Ovary (tissue), 10 donors: ENCODE measurements at regions of chr6 and their contacts with region 1.

Region 1: GRCh38 chr6:155327326-155328073 is 13.2 kb upstream of the TFB1M start:
- DNase-seq: peak; percentile 56 to 78 (median 68)
- H3K4me3 ChIP-seq: no peak overlapping the region
- H3K27ac ChIP-seq: no peak overlapping the region
- H3K4me1 ChIP-seq: no peaks in the 10 kb centered on the region
- H3K27me3 ChIP-seq: no peaks in the 10 kb centered on the region
- CTCF ChIP-seq: peak; percentile 69 to 87 (median 81)
- EP300 ChIP-seq: no peak
- POLR2A ChIP-seq: no peak

Region 2: DNA sequence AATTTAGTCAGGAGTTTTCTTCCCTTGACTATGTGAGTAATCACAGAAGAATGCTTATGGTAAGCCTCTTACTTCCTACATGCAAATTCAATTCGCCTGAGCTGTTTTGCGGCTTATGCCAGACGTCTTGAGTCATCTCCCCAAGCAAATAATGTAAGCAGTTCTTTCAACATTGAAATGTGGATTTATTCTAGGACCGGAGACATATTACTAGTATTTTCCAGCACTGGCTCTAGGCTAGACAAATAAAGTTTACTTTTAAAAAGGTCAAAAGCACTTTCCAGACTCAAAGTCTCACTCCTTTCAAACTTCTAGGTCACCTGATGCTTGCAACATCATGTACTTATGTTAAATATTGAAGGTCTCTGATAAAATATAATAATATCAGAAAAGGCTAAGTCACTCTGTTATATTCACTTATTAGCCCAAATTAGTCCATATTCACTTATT is 166.2 kb after region 1 on chr6:
- intact Hi-C with region 1: loop called in 3 of 4 experiments (anchors 5 to 10 kb)
- DNase-seq: peak in 4 of 5 donors; percentile 36 to 69 (median 62)
- H3K4me3 ChIP-seq: no peak overlapping the region
- H3K27ac ChIP-seq: peak overlapping the region; percentile 40 to 82
- H3K4me1 ChIP-seq: peaks cover 4% of the 10 kb centered on the region
- H3K27me3 ChIP-seq: no peaks in the 10 kb centered on the region
- CTCF ChIP-seq: no peak
- EP300 ChIP-seq: no peak
- POLR2A ChIP-seq: no peak

Region 3: GRCh38 chr6:155530219-155530834 is 202.8 kb after region 1 on chr6:
- intact Hi-C with region 1: loop called in 1 of 4 experiments (anchors 10 kb)
- DNase-seq: no peak
- H3K4me3 ChIP-seq: no peak overlapping the region
- H3K27ac ChIP-seq: no peak overlapping the region
- H3K4me1 ChIP-seq: no peaks in the 10 kb centered on the region
- H3K27me3 ChIP-seq: no peaks in the 10 kb centered on the region
- CTCF ChIP-seq: peak in 2 of 3 donors; percentile 35 to 45
- EP300 ChIP-seq: no peak
- POLR2A ChIP-seq: no peak